ENCODE measurements at regions of chr6 and their contacts with region 1.

Region 1: GRCh38 chr6:90274451-90275030 is 22.1 kb downstream of the BACH2 start:
- DNase-seq: peak in 1 of 3 donors; percentile 41
- ATAC-seq: no peak
- H3K4me3 ChIP-seq: no peak overlapping the region
- H3K27ac ChIP-seq: no peak overlapping the region
- H3K4me1 ChIP-seq: no peaks in the 10 kb centered on the region
- H3K27me3 ChIP-seq: no peaks in the 10 kb centered on the region

Region 2: GRCh38 chr6:90222724-90223198 is 51.8 kb before region 1 on chr6:
- intact Hi-C with region 1: loop called in 1 of 4 experiments (anchors 10 kb)
- DNase-seq: no peak
- ATAC-seq: no peak
- H3K4me3 ChIP-seq: no peak overlapping the region
- H3K27ac ChIP-seq: no peak overlapping the region
- H3K4me1 ChIP-seq: peaks cover 4% of the 10 kb centered on the region
- H3K27me3 ChIP-seq: no peaks in the 10 kb centered on the region

Region 3: GRCh38 chr6:90918361-90918760 is 643.8 kb after region 1 on chr6:
- intact Hi-C with region 1: no loop called
- DNase-seq: no peak
- ATAC-seq: no peak
- H3K4me3 ChIP-seq: no peak overlapping the region
- H3K27ac ChIP-seq: no peak overlapping the region
- H3K4me1 ChIP-seq: no peaks in the 10 kb centered on the region
- H3K27me3 ChIP-seq: no peaks in the 10 kb centered on the region